ENCODE measurements at regions of chr7 and their contacts with region 1.

Region 1: DNA sequence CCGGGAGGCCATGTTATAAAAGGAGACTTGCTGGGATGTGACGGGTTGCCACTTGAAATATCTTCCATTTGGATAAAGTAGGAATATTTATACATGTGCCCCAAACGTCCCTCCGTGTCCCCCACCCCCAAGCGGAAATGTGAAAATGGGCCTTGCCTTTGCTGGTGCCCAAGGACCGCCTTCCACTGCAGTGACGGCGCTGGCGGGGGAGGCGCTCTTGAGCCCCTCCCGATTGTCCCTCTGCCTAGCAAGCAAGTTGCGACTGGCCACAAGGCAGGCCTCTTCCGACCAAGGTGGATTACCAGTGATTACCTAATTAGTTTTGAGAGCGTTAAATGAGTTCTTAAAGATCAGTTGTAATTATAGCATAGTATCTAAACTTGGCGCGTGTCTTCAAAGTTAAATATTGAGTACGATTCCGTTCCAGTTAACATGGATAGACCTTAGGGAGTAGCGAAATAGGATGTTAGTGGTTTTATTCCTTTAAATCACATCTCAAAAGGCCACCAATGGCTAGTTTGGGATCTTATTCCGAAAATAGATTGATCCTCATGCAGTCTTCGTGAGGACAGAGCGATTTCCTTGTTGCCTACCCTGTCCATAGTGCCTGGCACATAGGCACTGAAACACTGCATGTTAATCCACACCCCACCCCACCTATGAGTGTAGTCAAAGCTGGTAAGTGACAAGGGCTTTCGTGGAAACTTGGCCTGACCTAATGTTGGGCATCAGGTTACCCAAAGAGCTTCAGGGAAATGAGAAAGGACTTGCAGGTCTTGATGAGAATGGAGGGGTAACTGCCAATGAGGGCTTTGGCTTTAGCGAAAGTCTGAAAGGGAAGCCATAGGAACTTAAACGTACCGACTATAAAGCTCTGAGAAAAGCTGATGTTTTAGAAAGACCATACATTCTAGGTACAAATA is 1.1 kb downstream of the PPIA start:
- DNase-seq: peak; percentile 78 to 96
- H3K4me3 ChIP-seq: peak overlapping the region; percentile 83 to 95
- H3K27ac ChIP-seq: peak overlapping the region; percentile 99 to 100
- H3K4me1 ChIP-seq: peaks cover 3 to 14% of the 10 kb centered on the region in 2 donors
- H3K27me3 ChIP-seq: no peaks in the 10 kb centered on the region
- CTCF ChIP-seq: peak in 2 of 3 experiments; percentile 46 to 48

Region 2: DNA sequence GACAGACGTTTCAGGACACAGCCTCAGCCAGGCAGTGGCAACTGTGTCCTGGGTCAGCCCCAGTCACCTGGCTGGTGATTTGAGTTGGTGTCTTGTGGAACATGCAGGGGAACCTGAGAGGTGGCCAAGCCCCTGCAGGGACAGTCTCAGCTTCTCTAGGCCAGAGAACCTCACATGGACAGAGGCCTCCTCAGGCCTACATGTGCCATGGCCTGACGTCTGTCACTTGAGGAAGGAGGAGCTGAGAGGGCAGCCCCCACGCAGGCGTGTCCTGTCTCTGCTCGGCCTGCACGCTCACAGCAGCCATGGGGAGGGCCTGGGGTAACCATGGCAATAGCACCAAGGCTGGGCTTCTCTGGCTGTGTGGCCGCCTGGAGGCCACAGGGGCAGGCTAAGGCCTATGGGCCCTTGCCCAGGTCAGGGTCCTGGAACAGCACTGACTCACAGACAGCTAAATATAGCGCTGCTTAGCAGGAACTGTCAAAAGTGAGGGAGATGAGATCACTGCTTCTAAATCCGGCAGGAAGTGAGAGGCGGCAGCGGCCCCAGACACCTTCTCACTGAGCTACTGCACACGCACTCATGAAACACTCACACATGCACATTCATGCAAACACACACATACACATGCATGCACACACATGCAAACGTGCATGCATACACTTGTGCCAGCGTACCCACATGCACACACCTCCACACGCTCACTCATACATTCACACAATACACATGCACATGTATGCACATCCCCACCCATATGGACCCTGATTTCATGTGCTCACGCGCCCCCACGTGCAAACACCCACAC is 539.8 kb before region 1 on chr7:
- intact Hi-C with region 1: loop called (anchors 5 kb)
- DNase-seq: peak; percentile 84 to 96
- H3K4me3 ChIP-seq: peak overlapping the region; percentile 10 to 22
- H3K27ac ChIP-seq: peak overlapping the region; percentile 99 to 100
- H3K4me1 ChIP-seq: peaks cover 28 to 34% of the 10 kb centered on the region in 2 donors
- H3K27me3 ChIP-seq: no peaks in the 10 kb centered on the region
- CTCF ChIP-seq: no peak

Region 3: GRCh38 chr7:44581879-44582603 is 215.5 kb before region 1 on chr7 and contains the start of gene TMED4:
- intact Hi-C with region 1: loop called (anchors 1 kb)
- DNase-seq: peak; percentile 98 to 100
- H3K4me3 ChIP-seq: peak within 1 kb of the TSS; percentile 92 to 96
- H3K27ac ChIP-seq: peak within 1 kb of the TSS; percentile 88 to 97
- H3K4me1 ChIP-seq: peaks cover 6 to 17% of the 10 kb centered on the region in 2 donors
- H3K27me3 ChIP-seq: no peaks in the 10 kb centered on the region
- CTCF ChIP-seq: no peak
- total RNA-seq, gene TMED4: 69.1 TPM

Region 4: GRCh38 chr7:44633254-44634186 is 164.1 kb before region 1 on chr7:
- intact Hi-C with region 1: loop called (anchors 2 kb)
- DNase-seq: peak; percentile 41 to 89
- H3K4me3 ChIP-seq: no peak overlapping the region
- H3K27ac ChIP-seq: peak overlapping the region; percentile 84 to 90
- H3K4me1 ChIP-seq: peaks cover 3 to 26% of the 10 kb centered on the region in 2 donors
- H3K27me3 ChIP-seq: no peaks in the 10 kb centered on the region
- CTCF ChIP-seq: no peak

Region 5: GRCh38 chr7:44769776-44770662 is 27.6 kb before region 1 on chr7:
- intact Hi-C with region 1: loop called (anchors 1 kb)
- DNase-seq: no peak
- H3K4me3 ChIP-seq: peak overlapping the region; percentile 26 to 50
- H3K27ac ChIP-seq: peak overlapping the region; percentile 52 to 67
- H3K4me1 ChIP-seq: peaks cover 10 to 25% of the 10 kb centered on the region in 2 donors
- H3K27me3 ChIP-seq: no peaks in the 10 kb centered on the region
- CTCF ChIP-seq: no peak

Region 6: DNA sequence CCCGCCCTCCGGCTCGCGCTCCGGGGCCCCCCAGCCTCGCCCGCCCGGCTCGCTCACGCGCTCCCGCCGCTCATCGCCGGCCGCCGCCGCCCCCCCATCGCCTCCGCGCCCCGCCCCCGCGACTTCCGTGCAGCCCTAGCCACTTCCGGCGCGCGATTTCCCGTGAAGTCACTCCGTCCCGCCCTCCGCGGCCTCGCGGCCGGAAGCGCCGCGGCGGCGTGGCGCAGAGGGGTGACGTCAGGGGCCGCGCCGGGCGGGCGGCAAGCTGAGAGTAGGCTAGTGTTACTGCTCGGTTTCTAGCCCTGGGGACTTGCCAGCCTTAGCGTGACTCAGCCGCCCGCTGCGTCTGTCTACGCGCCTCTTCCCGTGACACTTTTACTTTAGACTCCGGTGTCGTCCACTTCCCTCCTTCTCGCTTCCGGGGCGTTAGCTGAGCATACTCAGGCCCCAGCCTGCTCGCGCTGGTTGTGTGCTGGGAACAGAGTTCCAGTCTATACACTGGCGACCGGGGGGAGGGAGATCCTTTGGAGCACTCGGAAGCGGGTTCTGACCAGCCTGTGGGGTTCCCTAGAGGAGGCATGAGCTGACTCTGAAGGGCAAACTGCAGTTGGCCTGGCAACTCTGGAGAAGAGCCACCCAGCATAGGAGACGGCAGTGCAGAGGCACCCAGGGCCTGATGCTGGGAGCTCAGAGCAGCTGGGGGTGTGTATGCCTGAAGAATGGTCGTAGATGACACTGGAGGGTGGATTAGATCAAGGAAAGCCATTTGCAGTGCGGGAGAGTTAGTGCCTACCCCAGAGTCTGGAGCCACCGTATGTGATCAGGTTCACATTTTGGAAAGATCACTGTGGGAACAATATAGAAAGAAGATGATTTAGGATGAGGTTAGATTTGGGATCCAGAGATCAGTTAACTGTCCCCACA is 88.1 kb after region 1 on chr7 and contains the start of gene PURB:
- intact Hi-C with region 1: loop called (anchors 1 kb)
- DNase-seq: peak; percentile 84 to 97
- H3K4me3 ChIP-seq: peak within 1 kb of the TSS; percentile 58 to 97
- H3K27ac ChIP-seq: peak within 1 kb of the TSS; percentile 98 to 99
- H3K4me1 ChIP-seq: peaks cover 13 to 34% of the 10 kb centered on the region in 2 donors
- H3K27me3 ChIP-seq: no peaks in the 10 kb centered on the region
- CTCF ChIP-seq: no peak
- total RNA-seq, gene PURB: 19.1 TPM

Region 7: GRCh38 chr7:45089341-45089891 is 291.8 kb after region 1 on chr7:
- intact Hi-C with region 1: loop called (anchors 5 kb)
- DNase-seq: peak in 1 of 2 donors; percentile 83
- H3K4me3 ChIP-seq: peak overlapping the region; percentile 80 to 91
- H3K27ac ChIP-seq: peak overlapping the region; percentile 89 to 92
- H3K4me1 ChIP-seq: peaks cover 3 to 11% of the 10 kb centered on the region in 2 donors
- H3K27me3 ChIP-seq: no peaks in the 10 kb centered on the region
- CTCF ChIP-seq: no peak

Measured in ascending aorta (tissue), 2 donors.